ENCODE measurements at regions of chr17 and their contacts with region 1.

Region 1: GRCh38 chr17:393806-394717 is 41.5 kb upstream of the RPH3AL start:
- DNase-seq: no peak
- ATAC-seq: no peak
- H3K4me3 ChIP-seq: no peak overlapping the region
- H3K27ac ChIP-seq: peak overlapping the region in 3 of 4 donors; percentile 22 to 54 (median 38)
- H3K4me1 ChIP-seq: no peaks in the 10 kb centered on the region
- H3K27me3 ChIP-seq: peaks cover 4 to 27% (median 19%) of the 10 kb centered on the region in 3 donors
- CTCF ChIP-seq: no peak
- POLR2A ChIP-seq: no peak

Region 2: DNA sequence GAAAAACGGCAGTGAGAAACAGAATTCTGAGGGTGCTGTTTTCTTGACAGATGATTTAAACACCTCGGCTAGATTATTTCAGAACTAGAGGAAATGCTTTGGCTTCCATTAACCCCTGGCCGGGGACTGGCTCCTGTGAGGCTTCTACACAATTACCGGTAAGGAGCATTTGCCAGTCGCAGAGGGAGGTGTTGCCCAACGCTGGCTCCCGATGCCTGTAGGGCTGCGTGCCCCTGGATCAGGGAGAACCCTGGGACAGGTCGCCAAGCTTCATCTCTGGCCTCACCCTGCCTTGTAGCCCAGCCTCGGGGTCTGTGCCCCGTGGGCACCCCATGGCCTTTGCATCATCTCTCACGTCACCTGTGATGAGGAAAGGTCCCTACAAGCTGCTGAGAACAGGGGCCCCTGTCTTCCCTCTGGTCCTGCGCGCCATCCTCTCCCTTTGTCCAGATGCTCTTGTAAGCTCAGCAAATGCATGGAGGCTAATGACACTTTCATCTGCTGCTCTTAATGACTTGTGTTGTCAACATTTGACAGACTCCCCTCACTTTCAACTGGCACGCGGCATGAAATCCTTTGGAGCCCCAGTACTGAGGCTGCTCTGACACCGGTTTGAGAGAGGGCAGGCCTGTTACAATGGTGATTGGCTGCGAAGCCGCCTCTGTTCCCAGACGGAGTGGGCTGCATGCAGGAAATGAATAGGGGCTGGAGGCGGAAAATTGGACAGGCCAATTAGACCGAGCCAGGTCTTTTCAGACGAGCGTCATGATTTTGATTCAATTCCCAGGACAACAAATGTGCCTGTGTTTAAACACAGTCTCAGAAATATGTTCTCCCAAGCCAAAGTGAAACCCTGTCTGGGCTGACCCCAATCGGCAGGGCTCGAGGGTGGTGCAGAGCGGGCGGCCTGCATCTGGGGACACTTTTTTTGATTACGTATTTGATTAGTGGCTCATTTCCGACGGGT is 127.1 kb before region 1 on chr17:
- in situ Hi-C with region 1: loop called in 1 of 4 experiments (anchors 10 kb)
- intact Hi-C with region 1: no loop called
- DNase-seq: peak in 1 of 2 donors; percentile 24
- ATAC-seq: peak; percentile 58 to 75
- H3K4me3 ChIP-seq: peak overlapping the region in 3 of 4 donors; percentile 12 to 22 (median 20)
- H3K27ac ChIP-seq: peak overlapping the region; percentile 46 to 79 (median 66)
- H3K4me1 ChIP-seq: peaks cover 16 to 20% of the 10 kb centered on the region in 2 donors
- H3K27me3 ChIP-seq: no peaks in the 10 kb centered on the region
- CTCF ChIP-seq: no peak
- POLR2A ChIP-seq: peak in 1 of 2 donors; percentile 33

Region 3: DNA sequence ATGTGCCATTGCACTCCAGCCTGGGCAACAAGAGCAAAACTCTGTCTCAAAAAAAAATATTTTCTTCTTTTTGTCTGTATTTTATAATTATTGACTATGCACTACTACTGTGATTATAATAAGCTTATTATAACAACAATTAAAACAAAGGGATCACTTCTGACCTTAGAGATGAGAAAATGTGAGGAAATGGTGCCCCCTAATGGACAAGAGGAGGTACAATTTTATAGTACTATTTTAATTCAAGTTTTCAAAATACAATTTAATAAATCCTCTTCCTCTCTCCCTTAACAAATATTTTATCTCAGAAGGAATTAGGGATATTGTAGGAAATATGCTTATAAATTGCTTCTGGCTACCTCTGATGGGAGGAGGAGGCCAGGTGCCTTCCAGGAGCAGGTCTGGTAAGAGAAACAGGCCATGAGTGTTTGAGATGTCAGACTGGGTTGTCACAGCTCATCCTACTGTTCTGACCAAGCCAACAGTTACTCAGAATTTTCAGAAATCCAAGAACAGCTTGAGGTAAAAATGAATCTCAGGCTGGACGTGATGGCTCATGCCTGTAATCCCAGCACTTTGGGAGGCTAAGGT is 306.5 kb after region 1 on chr17:
- in situ Hi-C with region 1: no loop called
- intact Hi-C with region 1: no loop called
- DNase-seq: no peak
- ATAC-seq: peak; percentile 54 to 56
- H3K4me3 ChIP-seq: no peak overlapping the region
- H3K27ac ChIP-seq: no peak overlapping the region
- H3K4me1 ChIP-seq: peaks cover under 1 to 5% of the 10 kb centered on the region in 2 donors
- H3K27me3 ChIP-seq: no peaks in the 10 kb centered on the region
- CTCF ChIP-seq: peak; percentile 62 to 82 (median 68)
- POLR2A ChIP-seq: no peak

Measured in gastrocnemius medialis (tissue), 4 donors.